Prostate gland (tissue), 2 donors: ENCODE measurements at regions of chr11 and their contacts with region 1.

Region 1: GRCh38 chr11:69010964-69011623 is 2.0 kb downstream of the MRGPRF start:
- DNase-seq: peak; percentile 64
- H3K4me3 ChIP-seq: peak overlapping the region; percentile 36 to 37
- H3K27ac ChIP-seq: peak overlapping the region; percentile 84 to 87
- H3K4me1 ChIP-seq: no peaks in the 10 kb centered on the region
- H3K27me3 ChIP-seq: no peaks in the 10 kb centered on the region
- CTCF ChIP-seq: no peak
- POLR2A ChIP-seq: peak; percentile 45

Region 2: GRCh38 chr11:68735125-68735524 is 276.0 kb before region 1 on chr11:
- intact Hi-C with region 1: no loop called
- DNase-seq: no peak
- H3K4me3 ChIP-seq: no peak overlapping the region
- H3K27ac ChIP-seq: no peak overlapping the region
- H3K4me1 ChIP-seq: peaks cover 3% of the 10 kb centered on the region
- H3K27me3 ChIP-seq: no peaks in the 10 kb centered on the region
- CTCF ChIP-seq: no peak
- POLR2A ChIP-seq: no peak

Region 3: GRCh38 chr11:68878022-68878421 is 133.1 kb before region 1 on chr11:
- intact Hi-C with region 1: no loop called
- DNase-seq: no peak
- H3K4me3 ChIP-seq: no peak overlapping the region
- H3K27ac ChIP-seq: no peak overlapping the region
- H3K4me1 ChIP-seq: peaks cover 7% of the 10 kb centered on the region
- H3K27me3 ChIP-seq: no peaks in the 10 kb centered on the region
- CTCF ChIP-seq: no peak
- POLR2A ChIP-seq: no peak

Region 4: DNA sequence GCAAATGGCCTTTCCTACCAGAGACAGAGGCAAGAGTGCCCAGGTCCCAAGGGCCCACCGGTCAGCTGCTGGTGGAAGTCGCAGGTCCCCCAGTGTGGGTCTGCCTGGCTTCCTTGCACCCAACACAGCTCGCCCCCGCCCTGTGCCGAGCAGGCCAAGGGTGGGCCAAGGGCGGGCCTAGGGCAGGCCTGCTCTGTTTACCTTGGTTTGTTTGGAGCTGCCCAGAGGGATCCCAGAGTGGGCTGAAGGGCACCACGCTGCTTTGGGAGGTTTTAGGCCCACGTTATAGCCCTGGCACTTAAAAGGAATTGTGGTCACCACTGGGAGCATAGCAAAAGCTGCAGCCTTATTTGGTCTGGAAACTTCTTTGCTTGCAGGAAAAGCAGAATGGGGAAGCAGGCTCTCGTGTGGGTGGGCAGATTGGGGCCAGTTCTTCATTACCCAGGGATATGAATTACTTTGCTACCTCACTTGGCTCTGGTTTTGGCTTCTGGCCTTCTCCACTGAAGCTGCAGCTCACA is 68.3 kb before region 1 on chr11:
- intact Hi-C with region 1: loop called (anchors 5 kb)
- DNase-seq: no peak
- H3K4me3 ChIP-seq: no peak overlapping the region
- H3K27ac ChIP-seq: peak overlapping the region; percentile 48 to 68
- H3K4me1 ChIP-seq: no peaks in the 10 kb centered on the region
- H3K27me3 ChIP-seq: no peaks in the 10 kb centered on the region
- CTCF ChIP-seq: no peak
- POLR2A ChIP-seq: no peak

Region 5: GRCh38 chr11:69048718-69049489 is 37.8 kb after region 1 on chr11 and contains the start of gene TPCN2:
- intact Hi-C with region 1: loop called (anchors 1 kb)
- DNase-seq: peak; percentile 91
- H3K4me3 ChIP-seq: peak within 1 kb of the TSS; percentile 89 to 100
- H3K27ac ChIP-seq: peak within 1 kb of the TSS; percentile 87 to 94
- H3K4me1 ChIP-seq: peaks cover 16% of the 10 kb centered on the region
- H3K27me3 ChIP-seq: no peaks in the 10 kb centered on the region
- CTCF ChIP-seq: peak in 1 of 4 experiments; percentile 22
- POLR2A ChIP-seq: peak; percentile 86
- total RNA-seq, gene TPCN2: 17.6 to 31.0 TPM

Region 6: DNA sequence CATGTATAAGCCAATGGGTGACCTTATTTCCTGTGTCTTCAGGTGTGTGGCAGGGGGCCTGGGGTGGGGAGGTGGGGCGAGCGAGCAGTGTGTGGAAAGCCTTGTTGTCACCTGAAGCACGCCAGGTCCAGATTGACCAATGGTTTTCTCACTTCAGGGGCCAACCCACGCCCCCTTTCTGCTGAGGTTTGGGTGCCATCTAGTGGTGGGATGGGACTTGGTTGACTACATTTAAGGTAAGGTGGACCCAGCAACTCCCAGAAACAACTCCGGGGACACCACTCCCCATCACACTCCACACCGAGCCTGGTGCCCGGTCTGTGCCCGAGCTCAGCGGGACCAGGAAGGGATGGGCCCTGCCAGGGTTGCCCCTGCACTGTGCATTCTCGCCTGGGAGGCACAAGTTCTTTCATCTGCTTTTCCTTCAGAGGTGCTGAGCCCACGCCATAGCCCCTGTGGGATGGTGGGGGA is 77.6 kb after region 1 on chr11:
- intact Hi-C with region 1: loop called (anchors 2 kb)
- DNase-seq: peak; percentile 72
- H3K4me3 ChIP-seq: no peak overlapping the region
- H3K27ac ChIP-seq: no peak overlapping the region
- H3K4me1 ChIP-seq: no peaks in the 10 kb centered on the region
- H3K27me3 ChIP-seq: no peaks in the 10 kb centered on the region
- CTCF ChIP-seq: peak; percentile 52 to 77 (median 72)
- POLR2A ChIP-seq: no peak